Motor neuron (in vitro differentiated cells): ENCODE measurements at regions of chr1 and their contacts with region 1.

Region 1: GRCh38 chr1:184386312-184387068 is at the start of gene C1orf21:
- ATAC-seq: peak; percentile 80 to 92 (median 84)
- H3K4me3 ChIP-seq: peak within 1 kb of the TSS; percentile 46 to 78 (median 53)
- H3K27ac ChIP-seq: peak within 1 kb of the TSS; percentile 93
- H3K4me1 ChIP-seq: peaks cover 25 to 33% of the 10 kb centered on the region in 2 donors
- total RNA-seq, gene C1orf21: 0.49 to 43.9 (median 17.9) TPM

Region 2: GRCh38 chr1:184691719-184692324 is 305.3 kb after region 1 on chr1:
- in situ Hi-C with region 1: loop called in 1 of 9 experiments (anchors 25 kb)
- ATAC-seq: peak in 3 of 8 experiments; percentile 33 to 69 (median 60)
- H3K4me3 ChIP-seq: no peak overlapping the region
- H3K27ac ChIP-seq: no peak overlapping the region
- H3K4me1 ChIP-seq: no peaks in the 10 kb centered on the region